Activated CD4-positive, alpha-beta T cell treated with anti-CD3 and anti-CD28 coated beads, Interleukin-2, amount 10 ng/mL, durations not matched to agents 7 days and 5 days (primary cell): ENCODE measurements at regions of chr20 and their contacts with region 1.

Region 1: GRCh38 chr20:9978397-9979004 is 56.3 kb upstream of the ANKEF1 start:
- DNase-seq: peak; percentile 63
- H3K4me3 Mint-ChIP-seq: no peak overlapping the region
- H3K27ac Mint-ChIP-seq: no peak overlapping the region
- H3K4me1 Mint-ChIP-seq: no peaks in the 10 kb centered on the region
- H3K27me3 Mint-ChIP-seq: peaks cover 12% of the 10 kb centered on the region

Region 2: DNA sequence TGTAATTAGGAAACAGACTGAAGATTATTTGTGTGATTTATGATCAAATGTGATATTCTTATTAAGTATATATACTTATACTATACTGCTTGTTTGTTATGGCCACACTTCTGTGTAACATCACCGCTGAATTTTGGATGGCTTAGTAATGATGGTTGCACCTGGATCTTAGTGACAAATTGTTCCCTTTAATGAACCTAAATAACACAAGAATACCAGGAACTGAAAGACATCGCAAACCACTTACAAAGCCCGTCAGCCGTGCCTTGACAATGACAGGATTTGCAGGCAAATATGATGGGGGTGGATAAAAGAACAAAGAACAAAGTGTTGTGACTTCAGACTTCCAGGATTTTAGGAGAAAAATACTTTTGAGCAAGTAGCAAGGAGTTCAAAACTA is 397.0 kb before region 1 on chr20:
- CTCF ChIA-PET with region 1: no interaction called
- POLR2A ChIA-PET with region 1: no interaction called
- DNase-seq: no peak
- H3K4me3 Mint-ChIP-seq: no peak overlapping the region
- H3K27ac Mint-ChIP-seq: no peak overlapping the region
- H3K4me1 Mint-ChIP-seq: no peaks in the 10 kb centered on the region
- H3K27me3 Mint-ChIP-seq: no peaks in the 10 kb centered on the region

Region 3: DNA sequence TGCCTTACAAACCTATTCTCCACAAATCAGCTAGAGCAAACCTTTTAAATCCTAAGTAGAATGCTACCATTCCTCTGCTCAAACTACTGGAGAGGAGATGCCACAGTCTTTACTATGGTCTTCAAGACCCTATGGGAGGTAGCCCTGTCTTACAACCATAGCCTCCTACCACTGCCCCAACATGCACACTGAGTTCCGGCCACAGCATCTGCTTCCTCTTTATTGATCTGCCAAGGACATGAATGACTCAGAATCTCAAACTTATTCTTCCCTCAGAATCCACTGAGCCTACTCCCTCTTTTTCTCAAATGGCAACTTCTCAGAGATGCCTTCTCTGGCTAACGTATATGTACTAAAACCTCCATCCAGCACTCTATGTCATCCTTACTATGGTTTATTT is 44.1 kb after region 1 on chr20:
- CTCF ChIA-PET with region 1: no interaction called
- POLR2A ChIA-PET with region 1: no interaction called
- DNase-seq: no peak
- H3K4me3 Mint-ChIP-seq: no peak overlapping the region
- H3K27ac Mint-ChIP-seq: no peak overlapping the region
- H3K4me1 Mint-ChIP-seq: peaks cover 4% of the 10 kb centered on the region
- H3K27me3 Mint-ChIP-seq: peaks cover 22% of the 10 kb centered on the region

Region 4: DNA sequence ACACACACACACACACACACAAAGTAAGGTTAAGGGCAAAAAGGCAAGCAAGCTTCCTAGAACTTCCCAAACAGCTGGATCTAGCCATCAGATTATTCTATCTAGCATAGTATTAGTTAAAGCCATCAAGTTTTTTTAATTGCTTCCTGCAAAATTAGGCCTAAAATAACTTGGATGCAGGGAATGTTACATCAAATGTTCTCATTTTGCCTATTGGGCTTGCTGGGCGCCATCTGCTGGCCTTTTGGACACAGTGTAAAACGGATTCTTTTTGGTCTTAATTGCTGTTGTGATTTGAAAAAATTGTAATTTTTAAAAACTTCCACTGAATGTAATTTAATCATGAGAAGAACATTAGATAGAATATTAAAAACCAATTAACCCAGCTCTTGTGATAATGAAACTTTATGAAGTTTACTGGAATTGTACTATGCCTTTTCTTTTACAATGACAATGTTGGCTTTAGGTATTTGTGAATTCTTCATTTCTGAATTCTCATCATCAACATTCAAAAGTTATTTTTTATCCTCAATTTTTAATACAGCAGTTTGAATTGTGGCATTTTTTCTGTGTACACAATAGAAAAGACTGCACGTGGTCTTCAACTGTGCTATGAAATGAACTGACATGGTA is 448.7 kb after region 1 on chr20:
- CTCF ChIA-PET with region 1: interaction called, 11 read pairs
- POLR2A ChIA-PET with region 1: no interaction called
- DNase-seq: peak; percentile 54
- H3K4me3 Mint-ChIP-seq: no peak overlapping the region
- H3K27ac Mint-ChIP-seq: no peak overlapping the region
- H3K4me1 Mint-ChIP-seq: peaks cover 28% of the 10 kb centered on the region
- H3K27me3 Mint-ChIP-seq: no peaks in the 10 kb centered on the region